MCF 10A (cell line): ENCODE measurements at regions of chr6 and their contacts with region 1.

Region 1: DNA sequence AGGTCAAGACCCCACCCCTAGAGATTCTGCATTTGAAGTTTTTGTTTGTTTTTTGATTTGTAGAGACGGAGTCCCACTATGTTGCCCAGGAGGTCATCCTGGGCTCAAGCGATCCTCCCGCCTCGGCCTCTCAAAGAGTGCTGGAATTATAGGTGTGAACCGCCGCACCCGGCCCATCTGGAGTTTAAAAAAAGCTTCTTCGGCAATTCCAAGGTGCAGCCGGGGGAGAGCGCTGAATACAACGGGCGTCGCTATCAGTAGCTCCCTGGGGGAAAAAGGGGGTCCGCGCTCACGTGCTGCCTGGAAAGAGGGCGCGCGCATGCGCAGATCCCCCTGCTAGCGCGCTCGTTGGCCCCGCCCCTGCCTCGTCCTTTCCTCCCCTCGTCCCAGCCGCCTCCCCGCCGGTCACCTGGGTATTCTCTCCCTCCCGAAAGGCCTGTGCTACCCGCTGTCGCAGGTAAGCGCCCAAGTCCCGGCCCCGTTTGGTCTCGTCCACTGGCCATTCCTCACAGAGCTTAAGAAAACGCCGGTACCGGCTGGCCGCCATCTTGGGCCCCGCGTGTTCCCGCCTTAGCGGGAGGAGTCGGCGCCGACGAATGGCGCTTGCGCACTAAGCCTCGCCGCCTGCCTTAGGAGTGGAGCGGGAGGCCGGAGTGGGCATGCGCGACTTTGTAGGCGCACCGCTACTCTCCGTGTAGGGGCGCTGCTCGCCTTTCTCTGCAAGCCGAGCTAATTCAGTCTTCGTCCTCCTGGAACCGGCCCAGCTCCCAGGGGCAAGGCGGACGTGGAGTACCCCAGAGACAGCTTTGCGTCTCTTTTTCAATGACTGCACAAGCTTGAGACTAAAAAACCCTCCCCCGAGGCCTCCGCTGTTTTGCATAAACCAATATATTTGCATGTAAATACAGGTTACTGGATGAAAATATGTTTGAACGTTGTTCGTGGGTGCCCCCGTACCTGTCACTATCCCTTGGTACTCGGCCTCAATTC is at the start of gene UQCC2:
- DNase-seq: peak; percentile 97
- H3K4me3 Mint-ChIP-seq: peak within 1 kb of the TSS; percentile 99
- H3K27ac Mint-ChIP-seq: peak within 1 kb of the TSS; percentile 84
- H3K4me1 Mint-ChIP-seq: peaks cover 24% of the 10 kb centered on the region
- H3K27me3 Mint-ChIP-seq: no peaks in the 10 kb centered on the region
- CTCF ChIP-seq: peak; percentile 61
- total RNA-seq, gene UQCC2: 122 and 147 TPM in 2 replicates

Region 2: DNA sequence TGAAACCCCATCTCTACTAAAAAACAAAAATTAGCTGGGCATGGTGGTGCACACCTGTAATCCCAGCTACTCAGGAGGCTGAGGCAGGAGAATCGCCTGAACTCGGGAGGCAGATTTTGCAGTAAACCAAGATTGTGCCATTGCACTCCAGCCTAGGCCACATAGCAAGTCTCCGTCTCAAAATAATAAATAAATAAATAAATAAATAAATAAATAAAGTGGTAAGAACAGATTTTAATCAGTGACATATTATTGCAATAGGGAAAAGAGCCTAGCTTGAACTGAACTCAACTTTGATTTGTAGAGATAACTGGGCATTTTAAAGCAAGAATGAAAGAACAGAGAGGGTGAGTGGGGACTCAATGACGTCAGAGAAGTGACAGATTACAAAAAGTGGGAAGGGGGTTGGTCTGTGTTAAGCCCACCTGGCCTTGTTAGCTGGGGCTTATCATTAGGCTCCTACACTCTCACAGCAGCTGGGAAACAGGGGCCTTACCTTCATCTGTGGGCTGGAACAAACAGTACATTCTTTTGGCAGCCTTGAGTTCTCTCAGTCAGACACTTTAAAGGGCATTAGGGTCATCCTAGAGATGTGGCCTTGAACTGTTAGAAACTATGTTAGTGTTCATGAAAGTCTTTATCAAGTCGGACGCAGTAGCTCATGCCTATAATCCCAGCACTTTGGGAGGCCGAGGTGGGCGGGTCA is 344.3 kb before region 1 on chr6:
- CTCF ChIA-PET with region 1: no interaction called
- POLR2A ChIA-PET with region 1: no interaction called
- intact Hi-C with region 1: no loop called
- DNase-seq: no peak
- H3K4me3 Mint-ChIP-seq: no peak overlapping the region
- H3K27ac Mint-ChIP-seq: no peak overlapping the region
- H3K4me1 Mint-ChIP-seq: peaks cover 5% of the 10 kb centered on the region
- H3K27me3 Mint-ChIP-seq: no peaks in the 10 kb centered on the region
- CTCF ChIP-seq: no peak

Region 3: DNA sequence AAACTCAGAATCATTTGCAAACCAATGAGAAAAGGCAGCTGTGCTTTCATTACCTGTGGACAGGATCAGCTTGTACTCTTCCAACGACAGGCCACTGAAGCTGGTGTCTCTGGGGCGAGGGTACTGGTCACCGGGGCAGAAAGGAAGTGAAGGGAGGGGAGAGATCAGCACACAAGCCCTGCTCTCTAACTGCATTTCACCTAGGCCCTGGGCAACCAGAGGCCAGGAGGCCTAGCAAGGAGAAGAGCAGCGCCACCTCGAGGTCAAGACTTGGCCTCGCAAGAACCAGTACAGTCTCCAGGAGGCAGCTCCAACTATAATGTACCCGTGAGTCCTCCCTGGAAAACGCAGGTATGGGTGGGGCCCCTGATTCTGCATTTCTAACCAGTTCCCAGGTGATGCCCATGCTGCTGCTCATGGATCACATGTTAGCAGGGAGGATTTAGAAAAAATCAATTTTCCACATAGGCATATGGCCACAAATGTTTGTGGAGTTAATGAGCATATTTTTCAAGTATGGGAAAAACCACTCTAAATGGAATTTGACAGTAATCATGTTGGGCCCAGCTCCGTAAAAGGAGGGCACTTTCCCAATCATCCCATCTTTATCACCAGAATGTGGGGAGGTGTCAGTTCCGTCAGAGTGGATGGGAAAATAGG is 10.9 kb before region 1 on chr6:
- CTCF ChIA-PET with region 1: interaction called, 22 read pairs
- POLR2A ChIA-PET with region 1: interaction called, 6 read pairs
- intact Hi-C with region 1: no loop called
- DNase-seq: peak; percentile 85
- H3K4me3 Mint-ChIP-seq: no peak overlapping the region
- H3K27ac Mint-ChIP-seq: no peak overlapping the region
- H3K4me1 Mint-ChIP-seq: peaks cover 19% of the 10 kb centered on the region
- H3K27me3 Mint-ChIP-seq: no peaks in the 10 kb centered on the region
- CTCF ChIP-seq: peak; percentile 69

Region 4: DNA sequence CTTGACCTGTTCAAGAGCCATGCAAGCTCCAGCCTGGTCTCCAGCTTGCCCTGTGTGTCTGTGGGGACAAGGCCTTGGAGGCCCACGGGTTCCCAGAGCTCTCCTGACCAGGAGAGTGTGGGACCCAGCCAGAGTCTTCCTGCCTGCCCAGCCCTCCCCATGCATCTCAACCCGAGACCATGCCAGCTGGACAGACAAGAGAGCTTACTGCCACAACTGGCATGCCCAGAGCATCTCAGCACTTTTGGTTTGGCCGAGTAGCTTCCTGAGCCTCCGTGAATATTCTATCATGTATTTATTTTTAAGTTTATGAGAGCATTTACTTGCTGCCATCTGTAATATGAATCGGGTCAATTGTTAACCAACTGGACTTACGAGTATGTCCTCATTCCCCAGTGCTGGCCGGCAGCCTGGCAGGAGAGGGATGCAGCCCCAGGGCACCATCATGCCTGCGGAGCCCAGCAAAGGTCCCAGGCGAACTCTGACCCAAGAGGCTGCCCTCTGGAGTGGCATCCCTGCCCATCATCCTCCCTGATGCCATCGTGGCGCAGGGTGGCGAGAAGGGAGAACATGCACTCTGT is 20.4 kb after region 1 on chr6:
- CTCF ChIA-PET with region 1: no interaction called
- POLR2A ChIA-PET with region 1: no interaction called
- intact Hi-C with region 1: no loop called
- DNase-seq: no peak
- H3K4me3 Mint-ChIP-seq: no peak overlapping the region
- H3K27ac Mint-ChIP-seq: no peak overlapping the region
- H3K4me1 Mint-ChIP-seq: no peaks in the 10 kb centered on the region
- H3K27me3 Mint-ChIP-seq: no peaks in the 10 kb centered on the region
- CTCF ChIP-seq: no peak

Region 5: GRCh38 chr6:33744001-33744848 is 32.8 kb after region 1 on chr6:
- CTCF ChIA-PET with region 1: interaction called, 69 read pairs
- POLR2A ChIA-PET with region 1: interaction called, 29 read pairs
- intact Hi-C with region 1: no loop called
- DNase-seq: peak; percentile 97
- H3K4me3 Mint-ChIP-seq: peak overlapping the region; percentile 3
- H3K27ac Mint-ChIP-seq: no peak overlapping the region
- H3K4me1 Mint-ChIP-seq: peaks cover 45% of the 10 kb centered on the region
- H3K27me3 Mint-ChIP-seq: no peaks in the 10 kb centered on the region
- CTCF ChIP-seq: peak; percentile 74

Region 6: DNA sequence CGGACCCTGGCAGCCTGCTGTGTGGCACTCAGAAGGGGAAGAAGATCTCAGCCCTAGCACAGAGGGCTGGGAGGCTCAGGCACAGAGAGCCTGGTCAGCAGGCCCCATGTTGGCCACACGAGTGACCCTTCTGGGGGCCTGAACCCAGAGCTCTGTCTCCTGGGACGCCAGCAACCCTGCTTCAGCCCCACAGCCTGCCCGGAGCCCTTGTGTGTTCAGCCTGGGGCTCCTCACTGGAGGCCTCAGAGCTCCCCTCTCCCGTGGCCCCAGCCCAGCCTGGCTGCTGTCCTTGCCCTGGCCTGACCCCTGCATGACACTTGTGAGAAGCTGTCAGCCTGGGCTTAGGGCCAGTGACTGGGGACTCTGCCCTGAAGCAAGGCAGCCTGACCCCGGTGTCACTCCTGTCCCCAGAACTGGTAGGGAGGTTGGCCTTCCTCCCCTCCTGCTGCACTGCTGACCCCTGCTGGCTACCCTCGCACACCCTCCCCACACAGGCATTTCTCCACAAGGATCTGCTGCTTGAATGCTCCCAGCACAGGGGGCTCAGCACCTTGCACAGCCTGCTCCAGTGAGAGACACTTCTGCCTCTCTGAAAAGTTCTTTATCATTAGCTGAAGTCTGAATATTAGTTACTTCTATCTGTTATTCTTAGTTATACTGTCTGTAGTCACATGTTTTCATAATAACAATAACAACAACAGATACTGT is 50.6 kb after region 1 on chr6:
- CTCF ChIA-PET with region 1: interaction called, 115 read pairs
- POLR2A ChIA-PET with region 1: interaction called, 11 read pairs
- intact Hi-C with region 1: loop called (anchors 1 kb)
- DNase-seq: peak; percentile 75
- H3K4me3 Mint-ChIP-seq: no peak overlapping the region
- H3K27ac Mint-ChIP-seq: no peak overlapping the region
- H3K4me1 Mint-ChIP-seq: peaks cover 15% of the 10 kb centered on the region
- H3K27me3 Mint-ChIP-seq: no peaks in the 10 kb centered on the region
- CTCF ChIP-seq: peak; percentile 80

Region 7: GRCh38 chr6:33935439-33936080 is 224.1 kb after region 1 on chr6:
- CTCF ChIA-PET with region 1: no interaction called
- POLR2A ChIA-PET with region 1: no interaction called
- intact Hi-C with region 1: no loop called
- DNase-seq: no peak
- H3K4me3 Mint-ChIP-seq: no peak overlapping the region
- H3K27ac Mint-ChIP-seq: no peak overlapping the region
- H3K4me1 Mint-ChIP-seq: peaks cover 5% of the 10 kb centered on the region
- H3K27me3 Mint-ChIP-seq: peaks cover 70% of the 10 kb centered on the region
- CTCF ChIP-seq: no peak

Region 8: DNA sequence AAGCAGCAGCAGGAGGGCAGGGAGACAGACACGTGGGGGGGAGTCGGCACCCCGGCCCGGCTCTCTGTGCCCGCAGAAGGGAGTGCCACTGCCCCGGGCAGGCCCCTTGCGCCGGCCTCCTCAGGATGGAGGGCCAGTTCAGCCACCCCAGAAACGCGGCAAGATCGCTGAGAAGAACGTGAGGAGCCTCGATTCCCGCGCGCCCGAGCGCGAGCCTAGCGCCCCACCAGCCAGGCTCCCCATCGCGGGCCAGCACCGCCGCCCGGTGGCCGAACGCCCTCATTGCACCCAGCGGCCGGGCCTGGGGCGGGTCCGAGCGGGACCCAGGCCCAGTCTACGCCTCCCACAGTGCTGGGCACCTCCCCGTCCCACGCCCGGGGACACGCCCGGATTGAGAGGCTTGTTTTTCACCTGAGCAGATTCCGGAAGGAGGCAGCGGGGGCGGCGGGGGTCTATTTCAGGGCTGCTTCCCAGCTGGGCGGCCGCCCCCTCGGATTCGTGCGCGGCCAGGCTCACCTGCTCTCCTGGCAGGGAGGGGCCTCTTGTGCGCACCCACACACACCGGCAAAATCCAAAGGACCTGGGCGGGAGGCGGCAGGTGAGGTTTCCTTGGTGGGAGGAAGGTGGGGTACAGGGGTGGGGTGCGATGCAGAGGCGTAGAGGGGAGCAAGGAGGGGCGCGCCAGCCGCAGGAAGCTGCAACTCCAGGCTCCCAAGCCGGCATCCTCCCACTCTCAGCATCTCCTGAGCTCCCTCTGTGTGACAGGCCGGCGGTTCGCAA is 443.4 kb after region 1 on chr6:
- CTCF ChIA-PET with region 1: interaction called, 27 read pairs
- POLR2A ChIA-PET with region 1: interaction called, 3 read pairs
- intact Hi-C with region 1: no loop called
- DNase-seq: peak; percentile 43
- H3K4me3 Mint-ChIP-seq: peak overlapping the region; percentile 46
- H3K27ac Mint-ChIP-seq: no peak overlapping the region
- H3K4me1 Mint-ChIP-seq: no peaks in the 10 kb centered on the region
- H3K27me3 Mint-ChIP-seq: peaks cover 63% of the 10 kb centered on the region
- CTCF ChIP-seq: peak; percentile 99